ENCODE measurements at regions of chr22 and their contacts with region 1.

Region 1: GRCh38 chr22:17785185-17786184 is 11.2 kb upstream of the BID start:
- DNase-seq: no peak
- ATAC-seq: peak; percentile 67
- H3K4me3 ChIP-seq: no peak overlapping the region
- H3K27ac ChIP-seq: no peak overlapping the region
- H3K4me1 ChIP-seq: peaks cover 26% of the 10 kb centered on the region
- H3K27me3 ChIP-seq: no peaks in the 10 kb centered on the region
- CTCF ChIP-seq: peak; percentile 74 to 84 (median 79); a peak in 5 of 6 replicates
- EP300 ChIP-seq: no peak
- POLR2A ChIP-seq: peak; percentile 59; the same call in 1 of the 2 replicates
- RAD21 ChIP-seq: peak; percentile 51

Region 2: GRCh38 chr22:17562906-17563870 is 222.3 kb before region 1 on chr22 and contains the start of gene SLC25A18:
- CTCF ChIA-PET with region 1: interaction called, 29 read pairs
- POLR2A ChIA-PET with region 1: no interaction called
- RAD21 ChIA-PET with region 1: interaction called, 13 read pairs
- SMC1A ChIA-PET with region 1: no interaction called
- in situ Hi-C with region 1: no loop called
- intact Hi-C with region 1: loop called (anchors 1 kb)
- DNase-seq: no peak
- ATAC-seq: no peak
- H3K4me3 ChIP-seq: no peak within 1 kb of the TSS
- H3K27ac ChIP-seq: no peak within 1 kb of the TSS
- H3K4me1 ChIP-seq: no peaks in the 10 kb centered on the region
- H3K27me3 ChIP-seq: no peaks in the 10 kb centered on the region; a peak in 1 of 4 replicates
- CTCF ChIP-seq: no peak
- EP300 ChIP-seq: no peak
- POLR2A ChIP-seq: no peak
- RAD21 ChIP-seq: no peak
- polyA plus RNA-seq, gene SLC25A18: 0.03 TPM in 1 of 2 experiments, not detected in the other

Region 3: DNA sequence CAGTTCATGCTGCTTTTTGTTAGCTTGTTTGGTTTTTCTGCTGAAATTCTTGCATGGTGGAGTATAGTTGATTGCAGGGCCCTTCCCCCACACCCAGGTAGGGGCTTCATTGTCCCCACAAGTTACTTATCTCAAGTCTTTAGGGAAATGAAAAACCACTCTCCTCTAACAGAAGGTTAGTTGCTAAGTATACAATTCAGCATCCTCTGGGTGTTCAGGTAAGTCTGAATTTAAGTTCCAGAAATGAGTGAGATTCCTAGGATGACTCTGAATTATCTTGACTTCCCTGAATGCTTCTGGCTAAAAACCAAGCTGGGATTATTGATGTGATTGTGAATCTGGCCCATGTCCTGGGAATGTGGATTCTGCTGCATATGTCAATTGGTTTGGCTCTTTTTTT is 106.6 kb before region 1 on chr22:
- CTCF ChIA-PET with region 1: no interaction called
- POLR2A ChIA-PET with region 1: no interaction called
- RAD21 ChIA-PET with region 1: no interaction called
- SMC1A ChIA-PET with region 1: no interaction called
- in situ Hi-C with region 1: no loop called
- intact Hi-C with region 1: no loop called
- DNase-seq: no peak
- ATAC-seq: no peak
- H3K4me3 ChIP-seq: no peak overlapping the region
- H3K27ac ChIP-seq: no peak overlapping the region
- H3K4me1 ChIP-seq: no peaks in the 10 kb centered on the region
- H3K27me3 ChIP-seq: no peaks in the 10 kb centered on the region
- CTCF ChIP-seq: no peak
- EP300 ChIP-seq: no peak
- POLR2A ChIP-seq: no peak
- RAD21 ChIP-seq: no peak

Region 4: DNA sequence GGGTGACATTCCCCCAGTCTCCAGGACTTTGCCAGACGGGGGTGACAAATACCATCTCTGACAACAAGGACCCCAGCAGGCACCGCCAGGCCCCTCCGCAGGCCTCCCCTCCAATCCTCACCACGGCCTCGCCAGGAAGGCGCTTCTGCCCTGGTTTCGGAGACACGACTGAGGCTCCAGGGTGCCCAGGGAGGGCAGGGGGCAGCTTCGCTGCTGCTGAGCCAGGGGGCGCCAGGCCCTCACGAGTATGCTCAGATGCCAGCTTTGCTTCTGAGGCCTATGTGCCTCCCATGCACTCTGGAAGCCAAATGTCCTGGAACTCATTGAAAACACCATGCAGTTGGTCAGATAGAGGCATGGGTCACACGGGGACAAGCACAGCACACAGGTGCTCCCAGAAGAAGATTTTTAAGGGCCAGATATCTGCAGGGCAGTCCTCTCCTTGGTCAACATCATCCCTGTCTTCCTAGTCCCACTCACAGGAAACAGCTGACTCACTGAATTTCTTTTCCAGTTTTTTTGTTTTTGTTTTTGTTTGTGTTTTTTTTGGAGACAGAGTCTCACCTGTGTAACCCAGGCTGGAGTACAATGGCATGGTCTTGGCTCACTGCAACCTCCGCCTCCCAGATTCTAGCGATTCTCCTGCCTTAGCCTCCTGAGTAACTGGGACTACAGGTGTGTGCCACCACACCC is 31.1 kb before region 1 on chr22:
- CTCF ChIA-PET with region 1: interaction called, 12 read pairs
- POLR2A ChIA-PET with region 1: no interaction called
- RAD21 ChIA-PET with region 1: interaction called, 17 read pairs
- SMC1A ChIA-PET with region 1: interaction called, 9 read pairs
- in situ Hi-C with region 1: no loop called
- intact Hi-C with region 1: no loop called
- DNase-seq: no peak
- ATAC-seq: peak; percentile 82
- H3K4me3 ChIP-seq: no peak overlapping the region
- H3K27ac ChIP-seq: no peak overlapping the region
- H3K4me1 ChIP-seq: no peaks in the 10 kb centered on the region
- H3K27me3 ChIP-seq: no peaks in the 10 kb centered on the region
- CTCF ChIP-seq: peak; percentile 30 to 57 (median 52); a peak in 4 of 6 replicates
- EP300 ChIP-seq: no peak
- POLR2A ChIP-seq: no peak
- RAD21 ChIP-seq: peak; percentile 45; the same call in 1 of the 2 replicates

Region 5: GRCh38 chr22:17767233-17768065 is 18.0 kb before region 1 on chr22:
- CTCF ChIA-PET with region 1: interaction called, 47 read pairs
- POLR2A ChIA-PET with region 1: interaction called, 6 read pairs
- RAD21 ChIA-PET with region 1: interaction called, 28 read pairs
- SMC1A ChIA-PET with region 1: interaction called, 14 read pairs
- in situ Hi-C with region 1: no loop called
- intact Hi-C with region 1: no loop called
- DNase-seq: peak; percentile 85
- ATAC-seq: peak; percentile 88
- H3K4me3 ChIP-seq: peak overlapping the region; percentile 34; the same call in 1 of the 2 replicates
- H3K27ac ChIP-seq: peak overlapping the region; percentile 45
- H3K4me1 ChIP-seq: peaks cover 41% of the 10 kb centered on the region
- H3K27me3 ChIP-seq: no peaks in the 10 kb centered on the region
- CTCF ChIP-seq: no peak
- EP300 ChIP-seq: peak; percentile 53 to 90; a peak in 3 of 4 replicates
- POLR2A ChIP-seq: no peak
- RAD21 ChIP-seq: no peak

Region 6: DNA sequence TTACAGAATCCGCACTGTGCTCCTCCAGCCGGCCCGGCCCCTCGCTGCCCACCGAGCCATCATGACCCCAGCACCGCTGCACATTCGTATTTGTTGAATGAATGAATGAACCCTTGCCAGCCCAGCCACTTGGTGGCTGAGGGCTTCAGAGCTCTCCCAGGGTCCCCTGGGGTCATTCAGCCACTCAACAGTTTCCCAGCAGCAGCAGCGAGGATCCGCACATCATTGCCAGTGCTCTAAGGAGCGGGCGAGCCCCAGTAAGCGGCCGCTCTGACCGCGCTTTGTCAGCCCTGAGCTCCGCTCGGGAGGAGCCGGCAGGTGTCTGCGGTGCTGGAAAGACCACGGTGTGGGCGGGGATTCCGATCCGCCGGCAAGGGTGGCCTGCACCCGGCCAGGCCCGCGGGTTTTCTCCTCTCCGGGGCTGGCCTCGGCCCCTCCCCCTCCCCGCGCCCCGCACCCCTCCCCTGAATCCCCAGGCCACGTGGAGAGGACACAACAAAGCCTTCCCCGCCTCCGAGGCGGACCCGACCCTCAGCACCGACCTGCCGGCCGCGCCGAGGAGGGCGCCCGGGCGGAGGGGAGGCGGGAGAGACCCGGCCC is 11.8 kb before region 1 on chr22:
- CTCF ChIA-PET with region 1: interaction called, 47 read pairs
- POLR2A ChIA-PET with region 1: interaction called, 6 read pairs
- RAD21 ChIA-PET with region 1: interaction called, 28 read pairs
- SMC1A ChIA-PET with region 1: interaction called, 13 read pairs
- in situ Hi-C with region 1: no loop called
- intact Hi-C with region 1: no loop called
- DNase-seq: no peak
- ATAC-seq: peak; percentile 49
- H3K4me3 ChIP-seq: peak overlapping the region; percentile 83
- H3K27ac ChIP-seq: peak overlapping the region; percentile 69
- H3K4me1 ChIP-seq: peaks cover 46% of the 10 kb centered on the region
- H3K27me3 ChIP-seq: no peaks in the 10 kb centered on the region
- CTCF ChIP-seq: no peak
- EP300 ChIP-seq: no peak
- POLR2A ChIP-seq: no peak; the same call in none of the 2 replicates
- RAD21 ChIP-seq: no peak

Region 7: DNA sequence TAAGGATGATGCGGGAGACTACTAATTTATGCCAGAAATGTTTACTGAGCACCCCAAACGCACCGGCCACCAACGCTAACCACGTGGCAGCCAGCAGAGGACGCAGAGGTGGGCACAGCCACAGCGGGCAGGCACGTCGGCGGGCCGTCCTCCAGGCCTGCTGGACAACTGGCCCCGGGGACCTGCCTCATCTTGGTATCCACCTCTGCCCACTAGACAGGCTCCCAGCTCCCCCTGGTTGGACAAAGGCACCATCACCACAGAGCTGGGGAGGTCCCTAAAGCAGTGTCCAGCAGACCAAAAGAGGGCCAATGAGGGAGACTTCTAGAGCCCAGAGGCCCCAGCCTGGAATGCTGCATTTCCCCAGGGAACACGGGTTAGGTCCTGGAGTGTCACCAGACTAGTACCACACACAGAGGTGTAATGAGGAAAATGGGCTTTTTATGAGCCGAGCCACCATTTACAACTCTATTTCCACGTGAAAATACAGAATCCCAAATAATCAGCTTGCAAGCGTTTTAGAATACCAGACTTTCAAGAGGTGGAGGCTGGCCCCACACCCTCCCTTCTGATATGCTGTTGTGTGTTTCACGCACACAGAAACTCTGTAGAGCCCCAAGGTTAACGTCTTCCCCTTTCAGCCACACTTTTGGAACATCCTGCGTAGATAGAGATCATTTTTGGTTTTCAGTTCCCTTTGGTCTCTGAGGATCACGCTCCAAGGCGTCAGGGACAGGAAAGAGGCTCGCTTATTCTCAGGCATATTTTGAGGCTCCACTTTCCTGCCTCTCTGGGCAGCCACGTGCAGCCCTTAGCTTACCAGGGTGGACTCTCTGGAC is 12.5 kb after region 1 on chr22:
- CTCF ChIA-PET with region 1: interaction called, 70 read pairs
- POLR2A ChIA-PET with region 1: interaction called, 85 read pairs
- RAD21 ChIA-PET with region 1: interaction called, 77 read pairs
- SMC1A ChIA-PET with region 1: interaction called, 14 read pairs
- in situ Hi-C with region 1: no loop called
- intact Hi-C with region 1: no loop called
- DNase-seq: peak; percentile 95
- ATAC-seq: peak; percentile 64
- H3K4me3 ChIP-seq: peak overlapping the region; percentile 63
- H3K27ac ChIP-seq: peak overlapping the region; percentile 100
- H3K4me1 ChIP-seq: peaks cover 86% of the 10 kb centered on the region
- H3K27me3 ChIP-seq: no peaks in the 10 kb centered on the region
- CTCF ChIP-seq: no peak
- EP300 ChIP-seq: peak; percentile 99 to 100
- POLR2A ChIP-seq: peak; percentile 41
- RAD21 ChIP-seq: no peak; the same call in 1 of the 2 replicates

Region 8: DNA sequence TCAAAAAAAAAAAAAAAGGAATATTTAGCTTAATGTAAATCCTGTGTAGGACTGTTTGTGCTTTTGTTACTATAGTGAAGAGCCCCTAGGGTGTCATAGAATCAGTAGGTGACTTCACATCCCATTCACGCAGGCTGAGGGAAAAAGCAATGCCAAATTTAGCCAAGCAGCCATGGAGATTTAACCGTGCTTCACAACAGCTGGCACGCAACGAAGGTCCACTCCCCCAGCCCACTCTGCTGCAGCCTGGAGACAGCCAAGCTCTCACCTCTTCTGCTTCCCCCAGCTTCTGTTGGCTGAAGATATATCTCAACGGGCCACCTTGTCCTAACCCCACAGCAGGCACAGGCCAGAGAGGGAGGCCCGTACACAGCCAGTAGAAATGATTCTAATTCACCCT is 67.6 kb after region 1 on chr22:
- CTCF ChIA-PET with region 1: no interaction called
- POLR2A ChIA-PET with region 1: no interaction called
- RAD21 ChIA-PET with region 1: no interaction called
- SMC1A ChIA-PET with region 1: no interaction called
- in situ Hi-C with region 1: no loop called
- intact Hi-C with region 1: no loop called
- DNase-seq: no peak
- ATAC-seq: no peak
- H3K4me3 ChIP-seq: no peak overlapping the region
- H3K27ac ChIP-seq: no peak overlapping the region
- H3K4me1 ChIP-seq: no peaks in the 10 kb centered on the region; the same call in 1 of the 2 replicates
- H3K27me3 ChIP-seq: no peaks in the 10 kb centered on the region
- CTCF ChIP-seq: no peak
- EP300 ChIP-seq: no peak
- POLR2A ChIP-seq: no peak
- RAD21 ChIP-seq: no peak

Measured in GM12878 (cell line).